ENCODE measurements at regions of chr7 and their contacts with region 1.

Region 1: GRCh38 chr7:100867040-100867775 is at the start of gene TRIP6:
- DNase-seq: peak; percentile 93
- ATAC-seq: peak; percentile 88
- H3K4me3 ChIP-seq: peak within 1 kb of the TSS; percentile 97
- H3K27ac ChIP-seq: peak within 1 kb of the TSS; percentile 99
- H3K4me1 ChIP-seq: peaks cover 18% of the 10 kb centered on the region
- H3K27me3 ChIP-seq: no peaks in the 10 kb centered on the region
- CTCF ChIP-seq: no peak
- POLR2A ChIP-seq: peak; percentile 78
- RAD21 ChIP-seq: no peak
- total RNA-seq, gene TRIP6: 36.4 and 39.2 TPM in 2 replicates

Region 2: DNA sequence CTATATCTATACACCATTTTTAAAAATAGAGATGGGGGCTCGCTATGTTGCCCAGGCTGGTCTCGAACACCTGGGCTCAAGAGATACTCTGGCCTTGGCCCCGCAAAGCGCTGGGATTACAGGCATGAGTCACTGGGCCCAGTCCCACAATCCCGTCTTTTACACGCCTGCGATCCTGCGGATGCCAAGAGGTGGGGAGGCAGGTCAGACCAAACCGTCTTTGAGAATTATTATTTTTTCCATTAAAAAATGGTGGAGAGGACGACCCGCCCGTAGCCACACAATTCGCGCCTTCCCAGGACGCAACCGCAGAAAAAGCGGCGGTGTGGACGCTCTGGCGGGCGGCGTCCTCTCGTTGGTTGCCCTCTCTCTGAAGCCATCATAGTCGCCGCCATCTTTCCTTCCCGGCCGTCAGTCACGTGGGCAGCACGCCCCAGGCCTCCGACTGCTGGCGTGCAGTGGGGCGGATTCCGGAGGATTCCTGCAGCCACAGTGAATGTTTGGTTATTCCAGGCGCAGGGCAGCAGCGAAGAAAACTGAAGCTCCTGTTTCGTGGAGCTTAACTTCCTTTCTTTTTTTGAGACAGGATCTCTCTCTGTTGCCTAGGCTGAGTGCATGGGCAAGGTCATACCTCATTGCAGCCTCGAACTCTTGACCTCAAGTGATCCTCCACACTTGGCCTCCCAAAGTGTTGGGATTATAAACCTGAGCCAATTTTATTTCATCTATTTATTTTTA is 29.9 kb before region 1 on chr7:
- CTCF ChIA-PET with region 1: no interaction called
- POLR2A ChIA-PET with region 1: no interaction called
- dilution Hi-C with region 1: no loop called
- in situ Hi-C with region 1: no loop called
- intact Hi-C with region 1: loop called (anchors 2 kb)
- DNase-seq: peak; percentile 90
- ATAC-seq: peak; percentile 100
- H3K4me3 ChIP-seq: peak overlapping the region; percentile 33
- H3K27ac ChIP-seq: peak overlapping the region; percentile 87
- H3K4me1 ChIP-seq: no peaks in the 10 kb centered on the region
- H3K27me3 ChIP-seq: no peaks in the 10 kb centered on the region
- CTCF ChIP-seq: no peak
- POLR2A ChIP-seq: no peak
- RAD21 ChIP-seq: no peak

Region 3: DNA sequence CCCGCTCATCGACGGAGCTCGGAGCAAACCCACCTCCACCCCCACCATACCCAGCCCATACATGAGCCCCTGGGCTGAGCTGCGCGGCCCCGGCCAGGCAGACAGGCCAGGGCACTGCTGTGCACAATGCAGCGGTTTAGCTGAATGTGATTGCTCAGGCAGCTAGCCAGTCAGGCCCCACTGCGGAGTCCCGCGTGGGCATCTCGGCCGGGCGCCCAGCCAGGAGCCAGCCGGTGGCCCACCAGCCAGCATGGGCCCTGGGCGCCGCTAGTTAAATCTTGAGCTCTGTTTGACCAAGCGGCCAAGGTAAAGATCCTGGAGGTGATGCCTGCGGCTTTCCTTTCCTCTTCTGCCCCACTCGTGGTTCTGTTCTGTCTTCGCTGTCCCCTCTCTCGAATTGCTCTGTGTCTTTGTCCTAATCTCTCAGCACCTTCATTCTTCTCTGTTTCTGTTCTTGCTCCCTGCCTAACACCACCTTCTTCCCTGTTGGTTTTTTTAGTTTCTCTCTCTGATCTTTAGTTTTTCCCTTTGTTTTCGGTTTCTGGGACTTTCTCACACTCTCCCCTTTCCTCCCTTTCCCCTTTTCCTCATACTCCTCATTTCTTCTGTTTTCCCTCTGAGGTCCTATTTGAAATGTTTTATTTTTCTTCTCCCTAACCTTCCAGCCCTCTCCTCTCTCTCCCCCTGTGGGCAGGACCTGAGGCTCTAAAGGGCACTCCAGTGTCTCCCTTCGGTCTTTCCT is 15.7 kb after region 1 on chr7:
- CTCF ChIA-PET with region 1: no interaction called
- POLR2A ChIA-PET with region 1: interaction called, 12 read pairs
- dilution Hi-C with region 1: no loop called
- in situ Hi-C with region 1: no loop called
- intact Hi-C with region 1: no loop called
- DNase-seq: no peak
- ATAC-seq: no peak
- H3K4me3 ChIP-seq: no peak overlapping the region
- H3K27ac ChIP-seq: no peak overlapping the region
- H3K4me1 ChIP-seq: peaks cover 2% of the 10 kb centered on the region; the same call in 1 of the 2 replicates
- H3K27me3 ChIP-seq: no peaks in the 10 kb centered on the region
- CTCF ChIP-seq: no peak
- POLR2A ChIP-seq: no peak
- RAD21 ChIP-seq: no peak

Measured in IMR-90 (cell line).